ENCODE measurements at regions of chr9 and their contacts with region 1.

Region 1: GRCh38 chr9:36328798-36329411 is 70.7 kb upstream of the GNE start:
- DNase-seq: peak; percentile 72 to 82
- ATAC-seq: peak; percentile 78 to 83; a peak in 5 of 6 replicates
- H3K4me3 ChIP-seq: no peak overlapping the region
- H3K27ac ChIP-seq: peak overlapping the region; percentile 63 to 72
- H3K4me1 ChIP-seq: peaks cover 12% of the 10 kb centered on the region
- CTCF ChIP-seq: peak; percentile 95
- EP300 ChIP-seq: no peak
- POLR2A ChIP-seq: no peak
- RAD21 ChIP-seq: peak; percentile 94 to 95

Region 2: GRCh38 chr9:36204906-36205547 is 123.9 kb before region 1 on chr9:
- CTCF ChIA-PET with region 1: interaction called, 19 read pairs
- POLR2A ChIA-PET with region 1: no interaction called
- DNase-seq: peak; percentile 54 to 59
- ATAC-seq: peak; percentile 93 to 94
- H3K4me3 ChIP-seq: no peak overlapping the region
- H3K27ac ChIP-seq: no peak overlapping the region
- H3K4me1 ChIP-seq: peaks cover 12% of the 10 kb centered on the region
- CTCF ChIP-seq: peak; percentile 22; the same call in 1 of the 3 replicates
- EP300 ChIP-seq: no peak
- POLR2A ChIP-seq: no peak
- RAD21 ChIP-seq: peak in 1 of 2 experiments; percentile 34; a peak in 2 of 5 replicates

Region 3: DNA sequence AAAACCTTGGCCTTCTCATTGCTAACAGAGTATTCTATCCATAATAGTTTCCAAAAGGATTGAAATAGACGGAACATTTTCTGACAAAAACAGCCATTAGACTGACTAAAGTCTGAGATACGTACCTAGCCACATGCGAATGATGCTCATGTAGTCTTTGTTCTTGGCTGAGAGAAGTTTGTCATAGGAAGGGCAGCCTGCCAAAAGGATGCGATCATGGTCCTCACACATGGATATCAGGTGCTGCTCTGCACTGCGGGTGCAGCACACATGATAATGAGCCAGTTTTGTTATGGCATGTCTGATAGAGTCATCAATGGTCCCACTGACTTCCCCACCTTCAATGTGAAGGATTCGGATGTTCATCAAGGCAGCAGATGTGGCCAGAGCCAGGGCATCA is 83.0 kb before region 1 on chr9:
- CTCF ChIA-PET with region 1: interaction called, 221 read pairs
- POLR2A ChIA-PET with region 1: interaction called, 3 read pairs
- DNase-seq: no peak
- ATAC-seq: no peak
- H3K4me3 ChIP-seq: no peak overlapping the region
- H3K27ac ChIP-seq: no peak overlapping the region
- H3K4me1 ChIP-seq: peaks cover 15% of the 10 kb centered on the region; the same call in 2 of the 3 replicates
- CTCF ChIP-seq: no peak
- EP300 ChIP-seq: no peak
- POLR2A ChIP-seq: no peak
- RAD21 ChIP-seq: no peak

Region 4: GRCh38 chr9:36268007-36268427 is 60.9 kb before region 1 on chr9:
- CTCF ChIA-PET with region 1: interaction called, 17 read pairs
- POLR2A ChIA-PET with region 1: no interaction called
- DNase-seq: no peak
- ATAC-seq: no peak
- H3K4me3 ChIP-seq: no peak overlapping the region
- H3K27ac ChIP-seq: peak overlapping the region in 1 of 2 experiments; percentile 69; a peak in 3 of 6 replicates
- H3K4me1 ChIP-seq: peaks cover 5% of the 10 kb centered on the region; the same call in 1 of the 3 replicates
- CTCF ChIP-seq: no peak
- EP300 ChIP-seq: no peak
- POLR2A ChIP-seq: no peak
- RAD21 ChIP-seq: no peak

Region 5: GRCh38 chr9:36306471-36307306 is 22.2 kb before region 1 on chr9:
- CTCF ChIA-PET with region 1: interaction called, 14 read pairs
- POLR2A ChIA-PET with region 1: no interaction called
- DNase-seq: peak; percentile 55 to 76
- ATAC-seq: peak; percentile 84 to 85
- H3K4me3 ChIP-seq: no peak overlapping the region
- H3K27ac ChIP-seq: peak overlapping the region; percentile 67 to 84
- H3K4me1 ChIP-seq: peaks cover 27% of the 10 kb centered on the region
- CTCF ChIP-seq: no peak
- EP300 ChIP-seq: peak in 1 of 2 experiments; percentile 34; a peak in 3 of 5 replicates
- POLR2A ChIP-seq: no peak
- RAD21 ChIP-seq: no peak

Measured in A549 (cell line).